Prostate gland (tissue), 2 donors: ENCODE measurements at regions of chr18 and their contacts with region 1.

Region 1: GRCh38 chr18:46334868-46335281 is 230.7 kb downstream of the HAUS1 start:
- DNase-seq: no peak
- H3K4me3 ChIP-seq: peak overlapping the region; percentile 40
- H3K27ac ChIP-seq: peak overlapping the region in 1 of 2 donors; percentile 58
- H3K4me1 ChIP-seq: no peaks in the 10 kb centered on the region
- H3K27me3 ChIP-seq: no peaks in the 10 kb centered on the region
- CTCF ChIP-seq: no peak
- POLR2A ChIP-seq: no peak

Region 2: GRCh38 chr18:46386788-46387187 is 51.9 kb after region 1 on chr18:
- intact Hi-C with region 1: loop called (anchors 5 kb)
- DNase-seq: peak; percentile 67
- H3K4me3 ChIP-seq: no peak overlapping the region
- H3K27ac ChIP-seq: peak overlapping the region; percentile 20 to 67
- H3K4me1 ChIP-seq: no peaks in the 10 kb centered on the region
- H3K27me3 ChIP-seq: no peaks in the 10 kb centered on the region
- CTCF ChIP-seq: no peak
- POLR2A ChIP-seq: no peak

Region 3: GRCh38 chr18:46411867-46412690 is 77.2 kb after region 1 on chr18:
- intact Hi-C with region 1: loop called (anchors 5 kb)
- DNase-seq: no peak
- H3K4me3 ChIP-seq: no peak overlapping the region
- H3K27ac ChIP-seq: peak overlapping the region; percentile 23 to 47
- H3K4me1 ChIP-seq: peaks cover 6% of the 10 kb centered on the region
- H3K27me3 ChIP-seq: no peaks in the 10 kb centered on the region
- CTCF ChIP-seq: no peak
- POLR2A ChIP-seq: no peak